Endothelial cell of umbilical vein (primary cell): ENCODE measurements at regions of chr12 and their contacts with region 1.

Region 1: DNA sequence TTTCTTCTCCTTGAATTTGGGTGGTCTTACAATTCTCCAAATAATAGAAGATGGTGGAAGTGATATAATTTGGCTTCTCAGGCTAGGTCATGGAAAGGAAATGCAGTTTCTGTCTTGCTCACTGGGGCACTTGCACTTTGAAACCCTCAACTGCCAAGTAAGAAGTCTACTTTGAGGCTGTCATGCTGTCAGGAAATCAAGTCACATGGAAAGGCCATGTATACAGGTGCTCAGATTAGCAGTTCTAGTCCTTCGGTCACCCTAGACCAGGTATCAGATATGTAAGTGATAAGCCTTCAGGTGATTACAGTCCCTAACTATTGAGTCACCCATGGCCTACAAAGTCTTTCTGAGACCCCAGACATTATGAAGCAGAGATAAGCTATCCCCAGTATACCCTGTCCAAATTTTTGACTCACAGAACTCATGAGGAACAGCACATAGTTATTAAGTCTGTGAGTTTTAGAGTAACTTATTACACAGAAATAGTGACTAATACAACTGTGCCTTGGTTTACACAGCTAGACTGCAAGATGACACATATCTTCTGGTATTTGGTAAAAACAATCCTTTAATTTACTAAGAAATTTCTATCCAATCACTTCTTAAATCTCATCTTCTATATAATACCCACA is 26.3 kb upstream of the BBS10 start:
- DNase-seq: no peak
- H3K4me3 ChIP-seq: no peak overlapping the region
- H3K27ac ChIP-seq: no peak overlapping the region
- H3K4me1 ChIP-seq: no peaks in the 10 kb centered on the region
- H3K27me3 ChIP-seq: no peaks in the 10 kb centered on the region
- CTCF ChIP-seq: no peak
- POLR2A ChIP-seq: no peak

Region 2: GRCh38 chr12:76410781-76411180 is 36.3 kb after region 1 on chr12:
- CTCF ChIA-PET with region 1: no interaction called
- POLR2A ChIA-PET with region 1: interaction called, 11 read pairs
- dilution Hi-C with region 1: no loop called
- intact Hi-C with region 1: no loop called
- DNase-seq: no peak
- H3K4me3 ChIP-seq: no peak overlapping the region
- H3K27ac ChIP-seq: no peak overlapping the region
- H3K4me1 ChIP-seq: no peaks in the 10 kb centered on the region
- H3K27me3 ChIP-seq: no peaks in the 10 kb centered on the region
- CTCF ChIP-seq: no peak
- POLR2A ChIP-seq: no peak

Region 3: DNA sequence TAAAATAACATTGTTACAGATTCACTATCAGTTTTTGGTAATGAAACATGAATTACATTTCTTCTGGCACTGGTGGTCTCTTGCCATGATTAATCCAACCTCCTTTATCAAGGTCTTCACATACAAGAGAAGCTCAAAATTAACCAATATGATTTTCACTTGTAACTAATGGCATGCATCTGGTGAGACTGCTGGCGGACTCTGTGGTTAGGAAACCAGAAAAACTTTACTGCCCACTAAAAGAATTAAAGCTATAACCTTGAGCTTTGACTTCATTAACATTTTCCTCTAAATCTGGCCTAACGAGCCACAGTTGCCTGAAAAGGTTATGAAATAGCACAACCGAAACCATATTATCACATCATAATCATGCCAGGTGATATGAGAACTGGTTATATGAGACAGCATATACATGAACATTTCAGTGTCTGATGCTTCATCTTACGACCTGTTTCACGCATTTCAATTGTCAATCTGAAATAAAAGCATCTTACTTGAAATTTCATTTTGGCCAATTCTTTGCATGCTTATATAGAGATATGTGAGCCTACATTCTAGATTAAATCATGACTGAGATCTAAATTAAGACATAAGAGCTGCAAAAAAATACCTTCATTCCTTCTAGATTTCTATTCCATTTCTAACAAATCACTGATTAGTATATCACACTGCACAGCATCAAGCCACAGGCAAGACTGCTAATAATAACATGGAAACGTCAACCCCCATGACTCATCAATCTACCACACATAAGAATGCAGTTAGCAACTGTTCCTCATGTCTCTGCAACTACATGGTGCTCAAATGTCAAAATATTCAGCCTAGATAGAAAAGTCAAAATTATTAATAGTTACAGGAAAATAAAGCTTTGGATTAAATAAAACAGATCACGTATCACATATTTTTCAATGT is 95.8 kb after region 1 on chr12:
- CTCF ChIA-PET with region 1: no interaction called
- POLR2A ChIA-PET with region 1: no interaction called
- dilution Hi-C with region 1: no loop called
- intact Hi-C with region 1: no loop called
- DNase-seq: peak; percentile 68
- H3K4me3 ChIP-seq: no peak overlapping the region
- H3K27ac ChIP-seq: no peak overlapping the region
- H3K4me1 ChIP-seq: peaks cover 8% of the 10 kb centered on the region
- H3K27me3 ChIP-seq: no peaks in the 10 kb centered on the region
- CTCF ChIP-seq: no peak
- POLR2A ChIP-seq: no peak

Region 4: GRCh38 chr12:76559400-76560085 is 185.0 kb after region 1 on chr12 and contains the start of gene OSBPL8:
- CTCF ChIA-PET with region 1: no interaction called
- POLR2A ChIA-PET with region 1: no interaction called
- dilution Hi-C with region 1: no loop called
- intact Hi-C with region 1: no loop called
- DNase-seq: peak; percentile 95
- H3K4me3 ChIP-seq: peak within 1 kb of the TSS; percentile 83 to 95 (median 88)
- H3K27ac ChIP-seq: peak within 1 kb of the TSS; percentile 84
- H3K4me1 ChIP-seq: peaks cover 27% of the 10 kb centered on the region
- H3K27me3 ChIP-seq: no peaks in the 10 kb centered on the region
- CTCF ChIP-seq: no peak
- POLR2A ChIP-seq: peak; percentile 91
- total RNA-seq, gene OSBPL8: 47.6 and 53.9 TPM in 2 replicates